Keratinocyte (primary cell): ENCODE measurements at regions of chr4 and their contacts with region 1.

Region 1: DNA sequence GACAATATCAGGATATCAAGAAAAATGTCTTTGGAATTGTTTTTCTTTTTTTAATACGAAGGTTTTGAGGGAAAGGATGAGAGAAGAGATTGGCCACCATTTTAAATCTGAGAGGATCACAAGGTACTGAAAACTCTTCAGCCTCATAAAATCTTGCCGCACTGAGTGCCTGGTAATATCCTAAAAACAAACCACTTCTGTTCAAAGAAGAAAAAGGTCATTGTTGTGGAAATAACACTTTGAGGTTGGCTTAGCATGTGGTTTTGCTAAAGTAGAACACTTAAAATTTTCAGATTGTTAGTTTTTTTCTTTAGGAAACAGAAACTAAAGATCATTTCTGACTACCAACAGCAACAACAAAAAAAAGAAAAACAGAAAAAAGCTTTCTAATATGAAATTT is 1.0 kb upstream of the CLDN22 start:
- DNase-seq: no peak
- H3K4me3 ChIP-seq: no peak overlapping the region
- H3K27ac ChIP-seq: no peak overlapping the region
- H3K4me1 ChIP-seq: no peaks in the 10 kb centered on the region
- H3K27me3 ChIP-seq: no peaks in the 10 kb centered on the region
- CTCF ChIP-seq: no peak

Region 2: GRCh38 chr4:183182873-183183725 is 138.0 kb before region 1 on chr4:
- dilution Hi-C with region 1: no loop called
- DNase-seq: no peak
- H3K4me3 ChIP-seq: no peak overlapping the region
- H3K27ac ChIP-seq: no peak overlapping the region
- H3K4me1 ChIP-seq: peaks cover 4% of the 10 kb centered on the region
- H3K27me3 ChIP-seq: no peaks in the 10 kb centered on the region
- CTCF ChIP-seq: no peak

Region 3: DNA sequence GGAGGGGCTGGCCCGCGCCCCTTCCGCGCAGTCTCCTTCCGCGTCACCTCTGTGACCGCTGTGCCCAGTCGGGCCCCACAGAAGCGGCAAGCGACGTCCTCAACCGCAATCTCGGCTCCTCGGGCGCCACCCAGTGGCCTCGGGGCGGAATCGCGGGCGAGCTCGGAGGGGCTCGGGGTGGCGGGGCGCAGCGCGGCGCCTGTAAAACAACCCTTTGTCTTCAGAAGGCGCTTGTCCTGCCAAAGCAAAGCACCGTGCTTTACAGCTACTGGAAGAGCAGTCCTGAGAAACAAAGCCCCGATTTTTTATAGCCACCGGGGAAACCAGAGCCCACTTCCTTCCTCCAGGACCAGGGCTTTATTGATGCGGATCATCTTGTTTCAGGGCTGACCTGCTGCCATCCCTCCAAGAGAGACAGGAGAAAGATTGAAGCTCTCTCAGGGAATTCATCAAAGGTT is 86.1 kb after region 1 on chr4:
- dilution Hi-C with region 1: loop called (anchors 10 kb)
- DNase-seq: no peak
- H3K4me3 ChIP-seq: peak overlapping the region; percentile 22 to 80 (median 75)
- H3K27ac ChIP-seq: no peak overlapping the region
- H3K4me1 ChIP-seq: no peaks in the 10 kb centered on the region
- H3K27me3 ChIP-seq: no peaks in the 10 kb centered on the region
- CTCF ChIP-seq: peak; percentile 76 to 94 (median 89)

Region 4: GRCh38 chr4:183686461-183686860 is 365.4 kb after region 1 on chr4:
- dilution Hi-C with region 1: no loop called
- DNase-seq: no peak
- H3K4me3 ChIP-seq: no peak overlapping the region
- H3K27ac ChIP-seq: no peak overlapping the region
- H3K4me1 ChIP-seq: no peaks in the 10 kb centered on the region
- H3K27me3 ChIP-seq: no peaks in the 10 kb centered on the region
- CTCF ChIP-seq: no peak